CD14-positive monocyte (primary cell): ENCODE measurements at regions of chr7 and their contacts with region 1.

Region 1: DNA sequence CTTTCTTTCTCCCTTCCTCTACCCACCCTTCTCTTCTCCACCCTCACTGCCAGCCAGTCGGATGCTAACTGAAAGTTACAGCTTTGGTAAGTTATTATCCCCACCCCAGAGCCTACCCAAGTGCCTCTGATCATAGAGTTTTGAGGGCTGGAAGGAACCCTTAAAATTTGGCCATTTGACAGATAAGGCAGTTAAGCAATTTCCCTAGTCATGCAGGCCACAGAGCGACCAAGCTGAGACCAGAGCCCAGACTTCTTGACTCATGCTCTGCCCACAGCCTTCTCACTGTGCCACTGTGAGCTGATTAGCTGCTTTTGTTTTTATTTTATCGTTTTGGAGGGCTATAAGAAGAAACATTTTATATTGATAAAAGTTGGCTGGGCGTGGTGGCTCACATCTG is 17.2 kb downstream of the SAP25 start:
- DNase-seq: peak; percentile 32 to 66 (median 52)
- H3K4me3 ChIP-seq: no peak overlapping the region
- H3K4me3 Mint-ChIP-seq: no peak overlapping the region
- H3K27ac ChIP-seq: peak overlapping the region in 1 of 2 donors; percentile 58
- H3K27ac Mint-ChIP-seq: peak overlapping the region; percentile 3 to 89 (median 66)
- H3K4me1 ChIP-seq: peaks cover 27 to 34% of the 10 kb centered on the region in 2 donors
- H3K4me1 Mint-ChIP-seq: peaks cover 30% of the 10 kb centered on the region
- H3K27me3 ChIP-seq: no peaks in the 10 kb centered on the region
- H3K27me3 Mint-ChIP-seq: no peaks in the 10 kb centered on the region
- CTCF ChIP-seq: no peak

Region 2: GRCh38 chr7:100266576-100267354 is 289.8 kb before region 1 on chr7:
- intact Hi-C with region 1: no loop called
- DNase-seq: no peak
- H3K4me3 ChIP-seq: no peak overlapping the region
- H3K4me3 Mint-ChIP-seq: no peak overlapping the region
- H3K27ac ChIP-seq: no peak overlapping the region
- H3K27ac Mint-ChIP-seq: no peak overlapping the region
- H3K4me1 ChIP-seq: peaks cover 0 to 3% of the 10 kb centered on the region in 2 donors
- H3K4me1 Mint-ChIP-seq: peaks cover 10% of the 10 kb centered on the region
- H3K27me3 ChIP-seq: peaks cover 2 to 8% of the 10 kb centered on the region in 2 donors
- H3K27me3 Mint-ChIP-seq: peaks cover 13 to 20% (median 15%) of the 10 kb centered on the region in 3 donors
- CTCF ChIP-seq: no peak

Region 3: GRCh38 chr7:100457033-100457432 is 99.5 kb before region 1 on chr7:
- intact Hi-C with region 1: no loop called
- DNase-seq: no peak
- H3K4me3 ChIP-seq: no peak overlapping the region
- H3K4me3 Mint-ChIP-seq: no peak overlapping the region
- H3K27ac ChIP-seq: no peak overlapping the region
- H3K27ac Mint-ChIP-seq: no peak overlapping the region
- H3K4me1 ChIP-seq: no peaks in the 10 kb centered on the region
- H3K4me1 Mint-ChIP-seq: peaks cover 8% of the 10 kb centered on the region
- H3K27me3 ChIP-seq: no peaks in the 10 kb centered on the region
- H3K27me3 Mint-ChIP-seq: peaks cover 1 to 8% (median 6%) of the 10 kb centered on the region in 3 donors
- CTCF ChIP-seq: no peak

Region 4: DNA sequence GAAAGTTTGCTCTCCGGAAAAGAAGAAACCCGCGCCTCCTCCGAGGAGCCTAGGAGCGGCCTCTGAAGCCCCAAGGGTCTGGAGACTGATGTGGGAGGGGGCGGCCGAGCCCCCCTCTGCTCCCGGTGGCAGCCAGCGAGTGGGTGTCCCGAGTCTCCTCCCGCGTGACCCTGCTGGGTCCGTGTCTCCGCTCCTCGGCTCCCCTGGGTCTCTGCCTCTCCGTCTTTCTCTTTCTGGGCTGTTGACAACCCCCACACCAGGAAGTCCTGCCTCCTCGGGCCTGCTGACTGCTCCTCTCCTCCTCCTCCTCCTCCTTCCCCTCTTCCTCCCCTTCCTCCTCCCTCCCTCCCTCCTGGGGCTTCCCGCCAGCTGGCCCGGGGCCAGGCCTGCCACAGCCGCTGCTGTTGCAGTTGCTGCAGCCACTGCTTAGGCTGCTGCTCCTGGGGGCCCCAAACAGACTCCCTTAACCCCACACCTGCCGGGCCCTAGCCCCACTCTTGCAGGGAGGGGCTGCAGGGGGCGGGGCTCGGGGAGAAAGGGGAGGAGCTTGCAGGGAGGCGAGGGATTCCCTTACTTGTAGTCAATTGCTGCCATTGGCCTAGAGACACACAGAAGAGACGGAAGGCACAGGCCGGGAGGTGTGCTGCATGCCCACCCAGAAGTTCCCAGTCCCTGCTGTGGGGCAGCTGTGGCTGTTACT is 77.4 kb before region 1 on chr7 and contains the start of gene TSC22D4:
- intact Hi-C with region 1: loop called (anchors 5 kb)
- DNase-seq: peak; percentile 85 to 88 (median 86)
- H3K4me3 ChIP-seq: peak within 1 kb of the TSS; percentile 51 to 99 (median 87)
- H3K4me3 Mint-ChIP-seq: peak within 1 kb of the TSS; percentile 96 to 99
- H3K27ac ChIP-seq: peak within 1 kb of the TSS; percentile 83 to 84
- H3K27ac Mint-ChIP-seq: peak within 1 kb of the TSS; percentile 82 to 96 (median 85)
- H3K4me1 ChIP-seq: peaks cover 45 to 63% of the 10 kb centered on the region in 2 donors
- H3K4me1 Mint-ChIP-seq: peaks cover 42% of the 10 kb centered on the region
- H3K27me3 ChIP-seq: peaks cover 0 to 4% of the 10 kb centered on the region in 2 donors
- H3K27me3 Mint-ChIP-seq: peaks cover 7 to 13% (median 11%) of the 10 kb centered on the region in 3 donors
- CTCF ChIP-seq: no peak
- polyA plus RNA-seq, gene TSC22D4: 23.8 to 91.5 (median 26.3) TPM